Mammary epithelial cell (primary cell): ENCODE measurements at regions of chr10 and their contacts with region 1.

Region 1: GRCh38 chr10:68784476-68784875 is 42.9 kb upstream of the STOX1 start:
- DNase-seq: no peak
- H3K4me3 ChIP-seq: no peak overlapping the region
- H3K27ac ChIP-seq: no peak overlapping the region
- H3K4me1 ChIP-seq: no peaks in the 10 kb centered on the region
- H3K27me3 ChIP-seq: no peaks in the 10 kb centered on the region
- CTCF ChIP-seq: no peak

Region 2: GRCh38 chr10:68735119-68735518 is 49.4 kb before region 1 on chr10:
- CTCF ChIA-PET with region 1: no interaction called
- dilution Hi-C with region 1: no loop called
- in situ Hi-C with region 1: no loop called
- intact Hi-C with region 1: loop called (anchors 5 kb)
- DNase-seq: no peak
- H3K4me3 ChIP-seq: no peak overlapping the region
- H3K27ac ChIP-seq: no peak overlapping the region
- H3K4me1 ChIP-seq: no peaks in the 10 kb centered on the region
- H3K27me3 ChIP-seq: no peaks in the 10 kb centered on the region
- CTCF ChIP-seq: no peak